PC-3 (cell line): ENCODE measurements at regions of chr7 and their contacts with region 1.

Region 1: DNA sequence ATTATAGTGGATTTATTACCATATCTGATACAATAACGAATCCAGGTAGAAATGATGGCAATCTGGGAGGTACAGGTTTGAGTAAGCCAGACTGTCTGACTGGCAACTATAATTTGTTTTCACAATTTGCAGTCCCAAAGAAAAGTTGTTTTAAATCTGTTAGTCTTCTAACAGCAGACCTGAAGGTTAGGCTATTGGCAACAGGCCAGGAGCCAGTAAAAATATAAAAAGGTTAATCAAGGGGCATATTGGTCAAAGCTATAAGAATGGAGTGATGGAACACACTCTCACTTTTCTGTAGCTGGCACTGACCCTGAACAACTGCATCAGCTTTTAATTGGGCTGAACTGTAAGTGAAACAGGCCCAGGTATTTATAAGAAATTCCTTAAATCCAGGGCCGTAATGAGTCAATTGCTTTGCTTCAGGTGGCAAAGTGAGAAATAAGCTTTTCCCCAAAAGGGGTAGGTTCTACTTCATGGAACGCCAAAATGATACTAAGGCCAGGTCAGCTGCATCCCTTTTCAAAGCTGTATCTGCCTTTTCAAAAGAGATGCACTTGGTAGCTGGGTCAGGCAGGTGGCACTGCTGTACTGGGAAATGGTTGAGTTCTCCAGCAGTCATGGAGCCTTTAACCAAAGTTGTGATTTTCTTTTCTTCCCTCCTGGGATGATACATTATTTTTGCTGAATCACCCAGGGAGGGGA is 7.0 kb upstream of the GPR22 start:
- DNase-seq: peak; percentile 80
- ATAC-seq: peak; percentile 97
- H3K4me3 ChIP-seq: no peak overlapping the region
- H3K27ac ChIP-seq: peak overlapping the region; percentile 28
- H3K4me1 ChIP-seq: peaks cover 9% of the 10 kb centered on the region; the same call in 1 of the 2 replicates
- H3K27me3 ChIP-seq: no peaks in the 10 kb centered on the region
- CTCF ChIP-seq: peak; percentile 92

Region 2: GRCh38 chr7:107201795-107202450 is 261.0 kb before region 1 on chr7:
- CTCF ChIA-PET with region 1: interaction called, 4 read pairs
- POLR2A ChIA-PET with region 1: no interaction called
- intact Hi-C with region 1: loop called (anchors 2 kb)
- DNase-seq: peak; percentile 80
- ATAC-seq: peak; percentile 87
- H3K4me3 ChIP-seq: no peak overlapping the region
- H3K27ac ChIP-seq: no peak overlapping the region
- H3K4me1 ChIP-seq: peaks cover 11% of the 10 kb centered on the region
- H3K27me3 ChIP-seq: no peaks in the 10 kb centered on the region
- CTCF ChIP-seq: peak; percentile 81

Region 3: DNA sequence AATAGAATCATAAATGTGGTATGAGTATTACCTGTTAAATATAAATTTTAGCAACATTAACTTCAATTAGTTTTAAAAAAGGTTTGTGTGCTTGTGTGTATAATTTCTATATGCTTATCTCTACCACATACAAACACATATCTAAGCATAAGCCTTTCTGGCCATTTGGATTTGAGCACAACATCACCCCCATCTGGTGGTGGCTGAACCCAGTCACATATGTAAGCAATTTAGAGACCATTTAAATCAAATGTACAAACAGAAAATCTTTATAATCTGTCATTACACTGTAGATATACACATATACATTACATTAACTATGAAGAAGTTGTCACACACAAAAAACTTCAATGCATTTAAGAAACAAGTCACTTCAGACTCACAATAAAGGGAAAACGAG is 38.7 kb after region 1 on chr7:
- CTCF ChIA-PET with region 1: interaction called, 9 read pairs
- POLR2A ChIA-PET with region 1: no interaction called
- intact Hi-C with region 1: loop called (anchors 1 kb)
- DNase-seq: peak; percentile 59
- ATAC-seq: peak; percentile 48; the same call in 1 of the 2 replicates
- H3K4me3 ChIP-seq: no peak overlapping the region
- H3K27ac ChIP-seq: no peak overlapping the region
- H3K4me1 ChIP-seq: peaks cover 14% of the 10 kb centered on the region
- H3K27me3 ChIP-seq: no peaks in the 10 kb centered on the region
- CTCF ChIP-seq: peak; percentile 74

Region 4: DNA sequence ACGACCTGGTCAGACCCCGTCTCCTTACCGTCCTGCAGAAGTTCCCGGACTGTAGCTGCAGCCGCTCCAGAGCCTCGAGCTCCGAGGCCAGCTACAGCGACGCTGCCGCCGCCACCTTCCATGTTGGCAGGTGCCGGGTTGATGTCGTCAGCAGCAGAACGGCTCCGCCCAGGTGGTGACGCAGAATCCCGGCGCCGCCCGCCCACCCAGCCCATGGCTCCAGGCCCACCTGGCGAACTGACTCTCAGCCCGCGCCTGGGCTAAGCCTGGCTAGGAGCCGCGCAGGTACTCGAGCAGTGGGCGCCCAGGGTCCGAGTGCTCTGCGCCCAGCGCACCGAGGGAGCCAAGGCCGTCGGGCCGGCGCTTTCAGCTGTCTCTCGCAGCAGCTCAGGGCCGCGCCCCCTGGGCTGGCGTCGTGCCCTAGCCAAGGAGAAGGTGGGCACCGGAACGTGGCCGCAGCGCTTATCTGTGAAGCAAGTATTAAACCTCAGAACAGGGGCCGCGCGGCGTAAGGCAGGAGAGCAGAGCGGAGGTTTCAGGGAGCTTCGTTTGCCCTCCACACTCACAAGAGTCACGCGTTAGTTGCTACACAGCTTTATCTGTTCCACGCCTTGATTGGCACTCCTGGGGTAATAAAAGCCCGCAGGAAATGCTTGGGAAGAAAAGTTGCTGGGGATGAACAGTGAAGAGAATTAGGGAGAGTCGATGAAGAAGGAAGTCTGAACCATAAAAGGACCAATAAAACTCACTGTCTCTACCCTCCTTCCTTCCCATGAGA is 101.1 kb after region 1 on chr7 and contains the starts of genes COG5 and DUS4L:
- CTCF ChIA-PET with region 1: interaction called, 9 read pairs
- POLR2A ChIA-PET with region 1: no interaction called
- intact Hi-C with region 1: loop called (anchors 5 kb)
- DNase-seq: peak; percentile 81
- ATAC-seq: peak; percentile 66
- H3K4me3 ChIP-seq: peak within 1 kb of the TSS; percentile 87
- H3K27ac ChIP-seq: peak within 1 kb of the TSS; percentile 97
- H3K4me1 ChIP-seq: peaks cover 55% of the 10 kb centered on the region
- H3K27me3 ChIP-seq: no peaks in the 10 kb centered on the region
- CTCF ChIP-seq: no peak
- total RNA-seq, gene COG5: 46.5 and 51.7 TPM in 2 replicates
- total RNA-seq, gene DUS4L: 10.2 and 12.9 TPM in 2 replicates

Region 5: GRCh38 chr7:107579885-107580715 is 117.2 kb after region 1 on chr7 and contains the start of gene BCAP29:
- CTCF ChIA-PET with region 1: interaction called, 3 read pairs
- POLR2A ChIA-PET with region 1: no interaction called
- intact Hi-C with region 1: loop called (anchors 1 kb)
- DNase-seq: peak; percentile 76
- ATAC-seq: peak; percentile 84
- H3K4me3 ChIP-seq: peak within 1 kb of the TSS; percentile 93
- H3K27ac ChIP-seq: peak within 1 kb of the TSS; percentile 58
- H3K4me1 ChIP-seq: peaks cover 19% of the 10 kb centered on the region
- H3K27me3 ChIP-seq: no peaks in the 10 kb centered on the region
- CTCF ChIP-seq: peak; percentile 33; the same call in 1 of the 2 replicates
- total RNA-seq, gene BCAP29: 32.0 and 65.9 TPM in 2 replicates

Region 6: DNA sequence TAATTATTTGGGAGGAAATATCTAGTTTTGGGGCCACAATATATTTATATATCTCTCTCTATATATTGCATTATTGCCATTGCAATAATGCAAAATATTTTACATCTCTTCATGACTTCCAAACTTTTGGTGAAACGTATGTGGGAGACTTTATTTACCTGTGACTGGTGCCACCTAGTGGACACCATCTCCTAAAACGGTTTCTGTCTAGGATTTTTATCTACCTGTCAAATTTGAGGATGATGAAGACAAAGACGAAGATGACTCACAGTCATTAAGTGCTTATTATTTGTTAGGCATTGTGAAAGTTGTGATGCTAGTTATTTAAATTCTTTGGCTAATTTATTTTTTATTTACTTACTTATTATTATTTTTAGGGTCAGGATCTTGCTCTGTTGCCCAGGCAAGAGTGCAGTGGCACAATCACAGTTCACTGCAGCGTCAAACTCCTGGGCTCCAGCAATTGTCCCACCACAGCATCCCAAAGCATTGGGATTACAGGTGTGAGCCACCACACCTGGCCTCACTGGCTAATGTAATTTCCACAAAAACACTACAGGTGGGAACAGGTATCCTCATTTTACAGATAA is 262.4 kb after region 1 on chr7:
- CTCF ChIA-PET with region 1: interaction called, 14 read pairs
- POLR2A ChIA-PET with region 1: interaction called, 9 read pairs
- intact Hi-C with region 1: loop called (anchors 1 kb)
- DNase-seq: peak; percentile 84
- ATAC-seq: peak; percentile 63
- H3K4me3 ChIP-seq: no peak overlapping the region
- H3K27ac ChIP-seq: no peak overlapping the region
- H3K4me1 ChIP-seq: no peaks in the 10 kb centered on the region
- H3K27me3 ChIP-seq: no peaks in the 10 kb centered on the region
- CTCF ChIP-seq: peak; percentile 77

Region 7: GRCh38 chr7:107879400-107880035 is 416.6 kb after region 1 on chr7:
- CTCF ChIA-PET with region 1: interaction called, 11 read pairs
- POLR2A ChIA-PET with region 1: no interaction called
- intact Hi-C with region 1: loop called (anchors 1 kb)
- DNase-seq: peak; percentile 70
- ATAC-seq: peak; percentile 78
- H3K4me3 ChIP-seq: peak overlapping the region; percentile 38; the same call in 1 of the 2 replicates
- H3K27ac ChIP-seq: no peak overlapping the region
- H3K4me1 ChIP-seq: peaks cover 5% of the 10 kb centered on the region; the same call in 1 of the 2 replicates
- H3K27me3 ChIP-seq: no peaks in the 10 kb centered on the region
- CTCF ChIP-seq: peak; percentile 79

Region 8: GRCh38 chr7:107939573-107940489 is 476.9 kb after region 1 on chr7:
- CTCF ChIA-PET with region 1: no interaction called
- POLR2A ChIA-PET with region 1: no interaction called
- intact Hi-C with region 1: no loop called
- DNase-seq: peak; percentile 41
- ATAC-seq: peak; percentile 57
- H3K4me3 ChIP-seq: no peak overlapping the region
- H3K27ac ChIP-seq: peak overlapping the region; percentile 60
- H3K4me1 ChIP-seq: peaks cover 10% of the 10 kb centered on the region; the same call in 1 of the 2 replicates
- H3K27me3 ChIP-seq: no peaks in the 10 kb centered on the region
- CTCF ChIP-seq: no peak